ENCODE measurements at regions of chr14 and their contacts with region 1.

Region 1: GRCh38 chr14:33704441-33704840 is 246.4 kb downstream of the EGLN3 start:
- DNase-seq: no peak
- ATAC-seq: peak; percentile 43; the same call in 1 of the 3 replicates
- H3K4me3 ChIP-seq: no peak overlapping the region
- H3K27ac ChIP-seq: no peak overlapping the region
- H3K4me1 ChIP-seq: no peaks in the 10 kb centered on the region
- H3K27me3 ChIP-seq: no peaks in the 10 kb centered on the region
- CTCF ChIP-seq: no peak
- EP300 ChIP-seq: no peak
- POLR2A ChIP-seq: no peak
- RAD21 ChIP-seq: no peak

Region 2: DNA sequence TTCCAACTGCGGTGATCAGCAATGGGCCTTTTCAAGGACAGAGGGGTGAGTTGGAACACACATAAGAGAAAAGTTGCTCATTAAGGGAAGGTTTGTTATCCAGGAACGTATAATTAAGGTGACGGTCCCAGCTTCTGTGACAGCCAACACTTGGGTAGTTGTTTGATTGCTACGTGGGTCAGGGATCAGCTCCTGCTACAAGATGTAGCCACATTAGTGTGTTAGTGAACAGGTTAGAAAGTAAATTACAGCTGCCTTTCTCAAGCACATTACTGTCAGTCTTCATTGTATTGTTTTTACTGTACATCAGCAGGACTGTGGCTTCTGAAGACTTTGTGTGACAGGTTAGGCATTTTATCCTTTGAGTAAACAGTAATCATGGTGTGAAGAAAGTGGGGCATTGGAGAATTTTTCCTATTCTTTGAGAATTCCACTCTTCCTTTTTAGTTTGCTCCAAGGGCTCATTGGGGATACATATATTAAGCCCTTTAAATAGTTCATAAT is 15.9 kb after region 1 on chr14:
- CTCF ChIA-PET with region 1: interaction called, 4 read pairs
- POLR2A ChIA-PET with region 1: interaction called, 11 read pairs
- RAD21 ChIA-PET with region 1: interaction called, 4 read pairs
- SMC1A ChIA-PET with region 1: interaction called, 23 read pairs
- in situ Hi-C with region 1: no loop called
- intact Hi-C with region 1: no loop called
- DNase-seq: no peak
- ATAC-seq: no peak
- H3K4me3 ChIP-seq: no peak overlapping the region
- H3K27ac ChIP-seq: no peak overlapping the region
- H3K4me1 ChIP-seq: no peaks in the 10 kb centered on the region
- H3K27me3 ChIP-seq: no peaks in the 10 kb centered on the region; a peak in 1 of 4 replicates
- CTCF ChIP-seq: no peak
- EP300 ChIP-seq: no peak
- POLR2A ChIP-seq: no peak
- RAD21 ChIP-seq: no peak

Region 3: DNA sequence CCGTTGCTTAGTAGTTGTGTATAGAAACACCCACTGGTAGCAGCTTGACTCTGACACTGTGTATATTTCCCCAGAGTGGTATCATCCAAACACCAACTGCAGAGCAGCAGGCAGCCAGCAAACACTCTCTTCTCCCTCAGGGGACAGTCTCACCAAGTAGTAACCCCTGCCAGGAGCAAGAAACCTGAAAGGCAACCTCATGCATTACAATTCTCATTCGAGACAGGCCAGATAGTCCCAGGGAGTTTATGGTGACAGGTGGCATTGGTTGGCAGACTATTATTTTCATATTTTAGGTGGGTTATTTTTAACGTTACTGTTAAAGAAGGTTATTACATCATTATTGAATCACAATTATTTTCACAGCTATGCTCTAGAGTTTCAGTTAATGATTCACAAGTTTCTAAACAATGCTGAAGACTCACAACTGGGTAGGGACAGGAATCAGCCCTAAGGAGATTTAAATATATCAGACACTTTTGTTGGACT is 23.6 kb after region 1 on chr14:
- CTCF ChIA-PET with region 1: interaction called, 4 read pairs
- POLR2A ChIA-PET with region 1: interaction called, 11 read pairs
- RAD21 ChIA-PET with region 1: interaction called, 7 read pairs
- SMC1A ChIA-PET with region 1: interaction called, 23 read pairs
- in situ Hi-C with region 1: no loop called
- intact Hi-C with region 1: no loop called
- DNase-seq: no peak
- ATAC-seq: peak; percentile 72
- H3K4me3 ChIP-seq: no peak overlapping the region
- H3K27ac ChIP-seq: no peak overlapping the region
- H3K4me1 ChIP-seq: no peaks in the 10 kb centered on the region
- H3K27me3 ChIP-seq: no peaks in the 10 kb centered on the region; a peak in 1 of 4 replicates
- CTCF ChIP-seq: no peak
- EP300 ChIP-seq: no peak
- POLR2A ChIP-seq: no peak
- RAD21 ChIP-seq: no peak